Sciatic nerve (tissue), 2 donors: ENCODE measurements at regions of chr16 and their contacts with region 1.

Region 1: DNA sequence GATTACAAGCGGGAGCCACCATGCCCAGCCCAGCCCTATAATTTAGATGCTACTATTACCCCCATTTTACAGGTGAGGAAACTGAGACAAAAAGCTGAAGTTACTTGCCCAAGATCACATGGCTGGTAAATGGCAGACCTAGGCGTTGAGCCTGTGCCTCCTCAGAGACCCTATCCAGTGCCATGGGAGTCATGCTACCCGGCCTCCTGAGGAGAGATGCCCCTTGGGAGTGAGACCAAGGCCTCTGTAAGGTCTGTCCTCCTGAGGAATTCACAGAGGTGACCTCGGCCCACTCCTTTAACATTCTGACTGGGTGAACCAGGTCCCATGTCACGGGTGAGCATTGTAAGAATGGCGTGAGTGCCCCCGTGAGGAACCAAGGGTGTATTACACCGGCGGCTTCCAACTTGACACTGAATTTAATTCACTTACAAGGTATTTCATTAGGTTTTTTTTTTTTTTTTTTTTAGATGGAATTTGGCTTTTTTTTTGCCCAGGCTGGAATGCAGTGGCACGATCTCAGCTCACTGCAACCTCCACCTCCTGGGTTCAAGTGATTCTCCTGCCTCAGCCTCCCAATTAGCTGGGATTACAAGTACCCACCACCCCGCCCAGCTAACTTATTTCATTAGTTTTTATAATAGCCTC is 95.7 kb downstream of the ABCC6 start:
- DNase-seq: peak; percentile 81
- ATAC-seq: peak; percentile 85

Region 2: GRCh38 chr16:15777533-15778203 is 349.9 kb before region 1 on chr16:
- intact Hi-C with region 1: loop called (anchors 10 kb)
- DNase-seq: no peak
- ATAC-seq: no peak

Region 3: DNA sequence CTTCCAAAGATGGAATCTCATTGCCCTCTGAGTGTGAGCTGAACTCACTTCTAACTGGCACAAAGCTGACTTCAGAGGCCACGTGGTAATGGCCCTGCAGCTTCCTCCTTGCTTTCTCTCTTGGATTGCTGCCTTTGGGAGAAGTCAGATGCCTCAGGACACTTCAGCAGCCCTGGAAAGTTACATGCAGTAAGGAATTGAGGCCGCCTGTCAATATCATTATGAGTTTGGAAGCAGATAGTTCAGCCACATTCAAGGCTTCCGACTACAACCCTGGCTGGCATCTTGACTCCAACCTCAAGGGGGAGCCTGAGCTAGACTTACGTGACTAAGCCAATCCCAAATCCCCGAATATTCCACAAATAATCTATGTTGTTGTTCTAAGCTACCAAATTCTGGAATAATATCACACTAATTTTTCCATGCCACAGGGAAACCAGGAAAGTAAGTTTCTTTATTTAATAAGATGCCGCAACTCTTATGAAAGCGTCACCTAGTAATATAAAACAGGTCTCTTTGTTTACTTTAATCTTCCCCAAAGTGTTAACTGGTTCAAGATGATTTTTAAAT is 252.8 kb before region 1 on chr16:
- intact Hi-C with region 1: loop called (anchors 10 kb)
- DNase-seq: peak; percentile 71
- ATAC-seq: peak; percentile 87